Activated T-helper 1 cell treated with anti-CD3 and anti-CD28 coated beads, Interleukin-12 subunit alpha, Interleukin-12 subunit beta, Interleukin-2, Interleukin-4 antibody, amounts not matched to agents 30 ng/mL and 10 ng/mL and 1 ng/mL, durations not matched to agents 14 hours and 24 hours and 36 hours (primary cell): ENCODE measurements at regions of chr6 and their contacts with region 1.

Region 1: GRCh38 chr6:33248925-33249731 is 22.5 kb downstream of the VPS52 start:
- DNase-seq: peak; percentile 95
- H3K4me3 Mint-ChIP-seq: peak overlapping the region; percentile 91
- H3K27ac Mint-ChIP-seq: peak overlapping the region; percentile 84
- H3K4me1 Mint-ChIP-seq: peaks cover 44% of the 10 kb centered on the region
- H3K27me3 Mint-ChIP-seq: peaks cover 4% of the 10 kb centered on the region

Region 2: DNA sequence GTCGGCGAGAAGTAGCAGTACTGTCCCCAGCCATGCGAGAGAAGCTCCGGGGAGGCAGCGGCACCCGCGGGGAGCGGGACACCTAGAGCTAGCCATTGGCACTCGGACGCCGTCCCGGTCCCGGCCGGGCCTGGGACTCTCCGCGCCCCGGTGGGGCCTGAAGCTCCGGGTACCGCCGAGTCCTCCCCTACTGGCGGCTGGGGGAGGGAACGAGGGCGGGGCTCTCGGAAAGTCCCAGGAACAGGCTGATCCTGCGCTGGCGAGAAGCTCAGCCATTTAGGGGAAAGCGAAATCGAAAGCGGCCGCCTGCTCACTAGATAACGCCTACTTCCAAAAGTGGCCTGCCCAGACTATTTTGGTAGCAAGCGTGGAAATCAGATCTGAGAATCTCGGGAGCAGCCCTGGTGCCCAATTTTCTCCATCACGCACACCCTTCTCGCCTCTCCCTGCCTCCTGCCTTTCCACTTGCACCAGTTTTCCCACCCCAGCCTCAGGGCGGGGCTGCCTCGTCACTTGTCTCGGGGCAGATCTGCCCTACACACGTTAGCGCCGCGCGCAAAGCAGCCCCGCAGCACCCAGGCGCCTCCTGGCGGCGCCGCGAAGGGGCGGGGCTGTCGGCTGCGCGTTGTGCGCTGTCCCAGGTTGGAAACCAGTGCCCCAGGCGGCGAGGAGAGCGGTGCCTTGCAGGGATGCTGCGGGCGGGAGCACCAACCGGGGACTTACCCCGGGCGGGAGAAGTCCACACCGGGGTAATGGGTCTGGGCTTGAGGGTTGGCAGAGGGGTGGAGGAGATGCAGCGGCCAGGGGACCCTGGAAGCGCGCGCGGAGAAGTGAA is 395.4 kb before region 1 on chr6 and contains the starts of genes PSMB9 and TAP1:
- intact Hi-C with region 1: loop called (anchors 1 kb)
- DNase-seq: peak; percentile 92
- H3K4me3 Mint-ChIP-seq: peak within 1 kb of the TSS; percentile 98
- H3K27ac Mint-ChIP-seq: peak within 1 kb of the TSS; percentile 99
- H3K4me1 Mint-ChIP-seq: peaks cover 71% of the 10 kb centered on the region
- H3K27me3 Mint-ChIP-seq: no peaks in the 10 kb centered on the region
- total RNA-seq, gene PSMB9: 249 and 253 TPM in 2 replicates
- total RNA-seq, gene TAP1: 284 and 290 TPM in 2 replicates

Region 3: DNA sequence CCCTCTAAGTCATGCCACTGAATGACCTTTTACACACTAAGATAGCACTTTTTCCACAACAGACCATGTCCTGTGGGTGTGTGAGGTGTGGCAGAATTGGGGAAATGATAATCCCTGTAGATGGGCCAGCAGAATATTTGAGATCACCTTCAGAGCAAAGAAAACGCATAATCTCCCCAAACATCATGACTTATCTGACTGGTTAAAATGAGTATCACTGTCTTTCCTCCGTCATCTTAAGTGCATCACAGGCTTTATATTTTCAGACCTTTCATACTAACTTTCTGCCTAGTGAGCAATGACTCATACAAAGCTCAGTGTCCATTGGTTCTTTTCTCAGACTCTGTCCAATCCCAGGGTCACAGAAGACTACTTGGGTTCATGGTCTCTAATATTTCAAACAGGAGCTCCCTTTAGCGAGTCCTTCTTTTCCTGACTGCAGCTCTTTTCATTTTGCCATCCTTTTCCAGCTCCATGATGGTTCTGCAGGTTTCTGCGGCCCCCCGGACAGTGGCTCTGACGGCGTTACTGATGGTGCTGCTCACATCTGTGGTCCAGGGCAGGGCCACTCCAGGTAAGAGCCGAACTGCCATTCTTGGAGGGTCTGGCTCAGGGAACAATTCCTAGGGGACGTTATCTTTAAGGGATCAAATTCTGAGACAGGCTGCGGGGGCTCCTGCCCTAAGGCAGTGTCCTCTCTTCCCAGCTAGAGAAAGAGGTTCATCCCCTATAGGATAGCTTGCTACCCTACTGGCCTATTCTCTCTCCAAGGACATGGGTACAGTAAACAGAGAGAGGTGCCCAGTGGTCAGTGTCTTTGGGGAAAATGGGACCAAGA is 173.3 kb before region 1 on chr6 and contains the start of gene HLA-DPB1:
- intact Hi-C with region 1: loop called (anchors 1 kb)
- DNase-seq: peak; percentile 40
- H3K4me3 Mint-ChIP-seq: peak within 1 kb of the TSS; percentile 78
- H3K27ac Mint-ChIP-seq: peak within 1 kb of the TSS; percentile 47
- H3K4me1 Mint-ChIP-seq: peaks cover 60% of the 10 kb centered on the region
- H3K27me3 Mint-ChIP-seq: peaks cover 4% of the 10 kb centered on the region
- total RNA-seq, gene HLA-DPB1: 12.2 and 12.3 TPM in 2 replicates

Region 4: GRCh38 chr6:33123732-33124524 is 125.2 kb before region 1 on chr6:
- intact Hi-C with region 1: loop called (anchors 1 kb)
- DNase-seq: no peak
- H3K4me3 Mint-ChIP-seq: no peak overlapping the region
- H3K27ac Mint-ChIP-seq: no peak overlapping the region
- H3K4me1 Mint-ChIP-seq: peaks cover 19% of the 10 kb centered on the region
- H3K27me3 Mint-ChIP-seq: peaks cover 26% of the 10 kb centered on the region

Region 5: GRCh38 chr6:33208091-33208967 is 40.8 kb before region 1 on chr6 and contains the start of gene RING1:
- intact Hi-C with region 1: loop called (anchors 1 kb)
- DNase-seq: peak; percentile 84
- H3K4me3 Mint-ChIP-seq: peak within 1 kb of the TSS; percentile 91
- H3K27ac Mint-ChIP-seq: peak within 1 kb of the TSS; percentile 96
- H3K4me1 Mint-ChIP-seq: peaks cover 50% of the 10 kb centered on the region
- H3K27me3 Mint-ChIP-seq: peaks cover 14% of the 10 kb centered on the region
- total RNA-seq, gene RING1: 50.7 and 53.4 TPM in 2 replicates

Region 6: GRCh38 chr6:33288921-33289748 is 40.0 kb after region 1 on chr6 and contains the starts of genes PFDN6 and WDR46:
- intact Hi-C with region 1: loop called (anchors 1 kb)
- DNase-seq: peak; percentile 83
- H3K4me3 Mint-ChIP-seq: peak within 1 kb of the TSS; percentile 98
- H3K27ac Mint-ChIP-seq: peak within 1 kb of the TSS; percentile 86
- H3K4me1 Mint-ChIP-seq: peaks cover 31% of the 10 kb centered on the region
- H3K27me3 Mint-ChIP-seq: no peaks in the 10 kb centered on the region
- total RNA-seq, gene PFDN6: 122 and 126 TPM in 2 replicates
- total RNA-seq, gene WDR46: 113 and 123 TPM in 2 replicates

Region 7: DNA sequence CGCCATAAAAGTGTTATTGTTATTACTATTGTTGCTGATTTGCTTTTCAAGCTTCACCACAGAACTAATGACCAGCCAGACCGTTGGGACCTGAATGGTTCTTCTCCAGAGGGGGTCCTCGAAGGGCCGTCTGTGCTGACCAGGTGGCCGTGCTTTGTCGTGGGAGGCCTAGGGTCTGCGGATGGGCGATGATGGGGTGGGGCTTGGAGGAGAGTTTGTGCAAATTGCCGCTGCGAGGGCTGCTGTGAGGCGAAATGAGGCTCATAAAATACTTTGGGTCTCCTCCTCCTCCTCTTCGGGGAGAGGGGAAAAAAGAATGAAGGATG is 74.5 kb after region 1 on chr6:
- intact Hi-C with region 1: loop called (anchors 1 kb)
- DNase-seq: no peak
- H3K4me3 Mint-ChIP-seq: peak overlapping the region; percentile 97
- H3K27ac Mint-ChIP-seq: peak overlapping the region; percentile 98
- H3K4me1 Mint-ChIP-seq: peaks cover 55% of the 10 kb centered on the region
- H3K27me3 Mint-ChIP-seq: no peaks in the 10 kb centered on the region

Region 8: DNA sequence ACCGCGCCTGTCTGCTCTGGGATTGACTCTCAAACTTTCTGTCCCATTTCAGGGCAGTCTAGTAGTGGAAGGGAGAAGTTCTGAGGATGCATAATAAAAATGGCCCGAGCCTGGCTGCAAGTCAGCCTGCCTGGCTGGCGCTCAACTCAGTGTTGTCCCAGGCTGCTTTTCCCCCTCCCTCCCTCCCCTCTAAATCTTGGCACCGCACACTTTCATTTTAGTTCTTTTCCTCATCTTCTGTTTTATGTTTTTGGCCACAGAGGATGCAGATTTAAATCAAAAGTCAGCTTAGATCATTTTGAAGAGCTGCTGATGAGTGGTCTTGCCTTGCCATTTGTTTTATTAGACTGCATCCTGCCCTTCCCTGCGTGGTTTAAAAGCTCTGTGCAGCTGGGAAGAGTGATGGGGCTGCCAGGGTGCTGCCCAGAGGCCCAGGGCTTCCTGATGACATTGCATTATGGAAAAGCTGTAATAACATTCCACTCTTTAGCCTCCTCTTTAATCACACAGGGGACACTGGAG is 468.9 kb after region 1 on chr6:
- intact Hi-C with region 1: no loop called
- DNase-seq: no peak
- H3K4me3 Mint-ChIP-seq: no peak overlapping the region
- H3K27ac Mint-ChIP-seq: no peak overlapping the region
- H3K4me1 Mint-ChIP-seq: no peaks in the 10 kb centered on the region
- H3K27me3 Mint-ChIP-seq: peaks cover 18% of the 10 kb centered on the region